GM10248 (cell line): ENCODE measurements at regions of chr14 and their contacts with region 1.

Region 1: GRCh38 chr14:92585981-92586937 is 72.7 kb downstream of the RIN3 start:
- DNase-seq: no peak
- CTCF ChIP-seq: no peak

Region 2: DNA sequence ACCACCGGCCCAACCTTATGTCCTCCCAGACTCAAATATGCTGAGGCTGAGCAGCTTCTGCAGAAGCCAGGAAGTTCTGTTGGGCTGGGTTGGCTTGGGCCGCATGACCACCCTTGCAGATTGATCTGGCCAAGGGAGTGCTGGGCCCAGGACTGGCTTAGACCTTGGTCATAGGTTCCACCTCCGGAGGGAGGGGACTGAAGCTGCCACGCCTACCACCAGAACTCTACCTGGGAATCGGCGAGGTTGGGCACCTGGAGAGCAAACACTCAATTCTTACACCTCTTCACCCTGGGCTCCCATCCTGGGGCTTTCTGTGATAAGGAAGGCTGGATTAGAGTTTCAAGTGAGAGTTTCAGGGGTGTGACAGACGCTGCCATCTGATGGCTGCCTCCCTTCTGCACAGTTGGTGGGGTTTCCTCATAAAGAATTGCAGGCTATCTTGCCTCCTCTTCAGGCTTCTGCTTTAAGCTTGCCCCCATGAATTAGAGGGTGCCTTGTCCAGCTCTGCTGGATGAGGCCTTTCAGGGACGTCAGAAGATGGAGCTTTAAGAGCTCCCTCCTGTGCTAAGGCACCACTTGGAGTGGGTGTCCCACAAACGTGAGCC is 257.5 kb before region 1 on chr14:
- CTCF ChIA-PET with region 1: no interaction called
- POLR2A ChIA-PET with region 1: no interaction called
- DNase-seq: no peak
- CTCF ChIP-seq: no peak

Region 3: DNA sequence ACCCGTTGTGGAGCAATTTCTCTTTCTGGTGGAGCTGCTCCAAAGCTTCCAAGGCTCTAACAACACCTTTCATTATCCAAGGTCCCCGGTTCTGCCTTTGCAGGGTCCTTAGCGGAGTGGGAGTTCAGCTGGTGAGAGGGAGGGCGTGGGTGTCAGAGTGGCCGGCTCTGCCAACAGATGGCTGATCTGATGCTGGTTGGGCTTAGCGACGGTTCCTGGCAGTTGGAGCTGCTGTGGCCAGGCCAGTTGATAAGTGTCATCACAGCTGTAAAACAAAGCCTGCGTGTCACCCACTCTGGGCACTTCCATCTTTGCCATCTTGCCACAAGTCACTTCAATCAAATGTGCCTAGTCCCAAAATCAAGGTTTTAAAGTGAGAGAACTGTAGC is 36.4 kb before region 1 on chr14:
- CTCF ChIA-PET with region 1: interaction called, 12 read pairs
- POLR2A ChIA-PET with region 1: no interaction called
- DNase-seq: no peak
- CTCF ChIP-seq: no peak

Region 4: DNA sequence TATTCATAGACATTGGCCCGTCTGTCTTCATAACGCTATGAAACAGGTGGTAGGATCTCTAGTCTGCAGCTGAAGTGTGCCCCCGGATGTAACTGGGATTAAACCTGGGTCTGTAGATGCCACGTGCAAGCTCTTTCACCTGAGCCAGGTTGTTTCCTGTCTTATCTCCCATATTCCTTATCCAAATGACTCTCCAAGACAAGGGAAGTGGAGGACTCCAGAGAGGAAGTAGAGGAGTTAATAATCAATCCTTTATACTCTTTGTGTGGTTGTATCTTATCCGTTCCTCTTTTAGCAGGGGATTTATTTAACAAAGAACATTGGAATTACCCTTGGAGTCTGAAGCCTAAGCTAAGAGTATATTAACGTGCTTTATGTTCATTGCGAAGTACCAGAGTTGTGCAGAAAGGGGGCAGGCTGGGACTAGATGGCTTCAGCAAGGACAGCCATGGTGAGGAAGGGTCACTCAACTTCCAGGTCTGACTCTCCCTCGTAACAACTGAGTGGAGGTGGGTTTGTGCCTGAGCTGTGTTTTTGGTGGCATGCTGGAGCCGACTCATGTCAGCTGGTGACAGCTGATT is 10.2 kb after region 1 on chr14:
- CTCF ChIA-PET with region 1: interaction called, 36 read pairs
- POLR2A ChIA-PET with region 1: no interaction called
- DNase-seq: no peak
- CTCF ChIP-seq: no peak

Region 5: DNA sequence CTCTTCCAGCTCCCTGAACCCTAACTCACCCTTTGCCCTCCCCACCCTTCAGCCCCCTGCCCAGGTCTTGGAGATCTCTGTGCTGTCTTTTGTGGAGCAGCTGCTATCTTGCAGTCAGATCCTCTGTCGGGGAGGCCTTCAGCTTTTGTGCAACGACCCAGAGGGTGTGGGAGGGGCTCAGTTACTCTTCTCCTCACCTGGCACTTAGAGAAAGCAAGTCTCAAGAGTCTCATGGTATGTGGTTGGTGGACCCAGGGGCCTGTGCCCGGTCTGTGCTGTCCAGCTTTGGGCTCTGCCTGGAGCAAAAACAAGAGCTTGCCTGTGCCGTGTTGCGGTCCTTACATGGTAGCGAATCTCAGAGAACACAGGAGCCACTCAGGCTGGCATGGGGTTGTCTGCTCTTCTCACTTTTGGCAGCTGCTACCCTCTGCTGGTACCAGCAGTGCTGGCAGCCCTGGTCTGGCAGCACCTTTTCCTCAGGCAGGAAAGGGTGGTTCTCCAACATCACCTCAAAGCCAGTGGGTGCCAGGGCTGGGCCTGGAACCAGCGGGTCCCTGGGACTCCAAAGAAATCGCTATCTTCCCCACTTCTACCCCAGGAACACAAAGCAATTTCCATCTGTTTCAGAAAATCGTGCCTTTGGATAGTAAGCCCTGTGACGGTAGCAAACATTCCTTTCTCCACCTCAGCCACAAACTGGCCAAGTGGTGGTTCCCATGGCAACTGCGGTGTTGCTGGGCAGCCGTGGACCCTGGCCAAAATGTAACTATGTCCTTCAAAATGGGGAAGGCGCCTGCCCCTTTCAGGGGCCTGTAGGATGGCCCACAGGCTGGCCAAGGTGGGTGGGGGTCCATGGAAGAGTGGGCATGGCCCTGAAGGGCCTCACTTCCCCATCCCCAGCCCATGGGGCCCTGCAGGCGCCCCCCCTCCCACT is 17.3 kb after region 1 on chr14:
- CTCF ChIA-PET with region 1: interaction called, 36 read pairs
- POLR2A ChIA-PET with region 1: no interaction called
- DNase-seq: no peak
- CTCF ChIP-seq: no peak

Region 6: DNA sequence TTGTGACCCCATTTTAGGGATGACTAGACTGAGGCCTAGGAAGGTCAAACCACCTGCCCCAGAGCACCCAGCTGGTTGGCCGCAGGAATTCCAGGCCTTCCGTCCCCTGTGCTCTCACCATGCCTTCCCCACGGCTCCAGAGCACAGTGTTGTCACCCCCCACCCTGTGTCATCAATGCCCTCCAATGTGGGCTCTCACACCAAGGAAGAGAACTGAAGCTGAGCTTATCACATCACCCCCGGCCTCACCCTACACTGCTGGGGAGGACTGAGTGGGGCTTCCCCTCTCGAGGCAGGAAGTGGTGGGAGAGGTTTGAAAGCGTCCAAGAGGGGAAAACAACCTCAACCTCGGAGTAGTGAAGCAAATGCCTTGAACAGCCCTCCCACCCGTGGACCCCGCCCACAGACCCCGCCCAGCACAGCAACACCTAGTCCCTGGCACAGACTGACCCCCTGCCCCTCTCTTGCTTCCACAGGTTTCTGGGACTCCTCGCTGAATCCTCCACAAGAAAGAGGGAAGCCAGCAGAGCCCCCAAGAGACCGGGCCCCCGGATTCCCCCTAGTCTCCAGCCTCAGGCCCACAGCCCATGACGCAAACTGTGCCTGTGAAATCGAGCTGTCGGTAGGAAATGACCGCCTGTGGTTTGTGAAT is 65.0 kb after region 1 on chr14:
- CTCF ChIA-PET with region 1: interaction called, 12 read pairs
- POLR2A ChIA-PET with region 1: interaction called, 3 read pairs
- DNase-seq: peak; percentile 88
- CTCF ChIP-seq: no peak

Region 7: DNA sequence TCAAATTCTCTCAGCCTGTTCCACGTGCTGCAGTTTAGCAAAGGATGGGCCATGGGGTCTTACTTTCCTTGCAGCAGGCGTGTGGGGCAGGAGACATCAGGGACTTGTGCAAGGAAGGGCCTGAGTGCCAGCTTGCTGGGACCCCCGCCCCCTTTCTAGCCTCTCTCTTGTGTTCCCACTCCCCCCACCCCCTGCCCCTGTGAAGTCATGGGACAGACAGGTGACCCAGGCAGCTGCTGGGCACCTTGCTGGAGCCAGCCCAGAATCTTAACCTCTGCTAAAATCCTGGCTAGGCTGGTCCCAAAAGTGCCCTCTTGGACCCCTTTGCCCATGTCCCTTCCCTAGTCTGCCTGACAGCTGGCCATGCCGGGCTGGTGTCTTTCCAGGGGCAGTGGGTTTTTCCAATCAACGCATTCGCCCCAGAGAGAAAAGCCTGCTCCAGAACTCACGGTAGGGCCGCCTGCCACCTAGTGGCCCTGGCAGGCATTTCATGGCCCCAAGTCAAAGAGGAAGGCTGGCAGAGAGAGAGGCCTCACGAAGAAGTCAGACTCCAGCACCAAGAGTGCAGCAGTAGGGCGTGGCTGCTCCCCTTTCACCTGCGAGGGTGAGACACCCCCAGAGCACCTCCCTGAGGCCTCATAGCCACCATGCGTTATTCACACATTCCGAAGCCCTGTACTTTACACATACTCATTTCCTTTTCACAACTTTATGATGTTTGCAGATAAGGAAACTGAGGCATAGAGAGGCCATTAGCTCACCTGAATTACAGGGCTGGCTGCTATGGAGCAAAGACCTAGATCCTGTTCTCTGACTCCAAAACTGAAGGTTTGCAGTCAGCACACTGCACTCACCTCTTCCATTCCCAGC is 94.8 kb after region 1 on chr14:
- CTCF ChIA-PET with region 1: interaction called, 16 read pairs
- POLR2A ChIA-PET with region 1: no interaction called
- DNase-seq: peak; percentile 81
- CTCF ChIP-seq: peak; percentile 92

Region 8: GRCh38 chr14:92690171-92691036 is 104.1 kb after region 1 on chr14:
- CTCF ChIA-PET with region 1: interaction called, 12 read pairs
- POLR2A ChIA-PET with region 1: no interaction called
- DNase-seq: no peak
- CTCF ChIP-seq: peak; percentile 73

Region 9: DNA sequence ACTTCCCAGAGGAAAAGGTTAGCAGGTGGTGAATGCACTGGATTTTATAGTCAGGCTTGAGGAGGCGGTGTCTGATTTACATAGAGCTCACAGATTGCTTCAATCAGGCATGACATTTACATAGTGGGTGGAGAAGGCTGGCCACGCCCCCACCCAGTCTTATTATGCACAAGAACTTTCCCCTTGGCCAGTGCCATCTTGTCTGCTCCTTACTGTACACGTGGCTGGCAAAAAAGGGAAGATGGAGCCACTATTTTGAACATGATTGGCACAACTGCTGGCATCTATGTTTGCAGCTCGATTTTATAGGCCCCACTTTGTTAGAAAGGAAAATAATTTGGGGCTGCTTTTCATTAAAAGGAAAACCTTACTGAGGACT is 173.0 kb after region 1 on chr14:
- CTCF ChIA-PET with region 1: no interaction called
- POLR2A ChIA-PET with region 1: no interaction called
- DNase-seq: no peak
- CTCF ChIP-seq: no peak